ENCODE measurements at regions of chr7 and their contacts with region 1.

Region 1: DNA sequence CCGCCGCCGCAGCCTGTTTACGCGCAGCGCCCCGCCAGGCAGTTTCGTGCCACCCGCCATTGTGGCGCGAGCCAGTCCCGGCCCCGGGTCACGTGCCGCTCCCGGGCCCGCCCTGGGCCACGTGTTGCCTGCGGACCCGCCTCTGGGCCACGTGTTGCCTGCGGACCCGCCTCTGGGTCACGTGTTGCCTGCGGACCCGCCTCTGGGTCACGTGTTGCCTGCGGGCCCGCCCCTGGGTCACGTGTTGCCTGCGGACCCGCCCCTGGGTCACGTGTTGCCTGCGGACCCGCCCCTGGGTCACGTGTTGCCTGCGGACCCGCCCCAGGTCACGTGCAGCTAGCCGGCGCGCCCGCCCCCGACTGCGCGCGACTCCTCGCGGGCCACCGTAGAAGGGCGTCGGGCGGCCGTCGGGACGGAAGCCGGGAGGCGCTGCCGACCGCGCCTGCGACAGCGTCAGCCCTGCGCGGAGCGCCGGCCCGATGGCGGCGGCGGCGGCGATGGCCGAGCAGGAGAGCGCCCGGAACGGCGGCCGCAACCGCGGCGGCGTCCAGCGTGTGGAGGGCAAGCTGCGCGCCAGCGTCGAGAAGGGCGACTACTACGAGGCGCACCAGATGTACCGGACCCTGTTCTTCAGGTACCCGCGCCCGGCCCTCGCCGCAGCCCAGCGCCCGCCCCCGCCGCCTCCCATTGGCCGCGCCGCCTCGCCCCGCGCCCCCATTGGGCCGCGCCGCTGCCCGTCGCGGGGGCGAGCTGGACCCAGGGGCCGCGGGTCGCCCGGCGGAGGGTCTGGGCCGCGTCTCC is at the start of gene GET4:
- DNase-seq: peak; percentile 96
- H3K4me3 ChIP-seq: peak within 1 kb of the TSS; percentile 66 to 99 (median 75)
- H3K27ac ChIP-seq: peak within 1 kb of the TSS; percentile 45
- H3K4me1 ChIP-seq: peaks cover 12% of the 10 kb centered on the region
- H3K27me3 ChIP-seq: no peaks in the 10 kb centered on the region
- CTCF ChIP-seq: peak in 1 of 2 donors; percentile 14
- POLR2A ChIP-seq: peak; percentile 80
- total RNA-seq, gene GET4: 44.7 and 48.4 TPM in 2 replicates

Region 2: DNA sequence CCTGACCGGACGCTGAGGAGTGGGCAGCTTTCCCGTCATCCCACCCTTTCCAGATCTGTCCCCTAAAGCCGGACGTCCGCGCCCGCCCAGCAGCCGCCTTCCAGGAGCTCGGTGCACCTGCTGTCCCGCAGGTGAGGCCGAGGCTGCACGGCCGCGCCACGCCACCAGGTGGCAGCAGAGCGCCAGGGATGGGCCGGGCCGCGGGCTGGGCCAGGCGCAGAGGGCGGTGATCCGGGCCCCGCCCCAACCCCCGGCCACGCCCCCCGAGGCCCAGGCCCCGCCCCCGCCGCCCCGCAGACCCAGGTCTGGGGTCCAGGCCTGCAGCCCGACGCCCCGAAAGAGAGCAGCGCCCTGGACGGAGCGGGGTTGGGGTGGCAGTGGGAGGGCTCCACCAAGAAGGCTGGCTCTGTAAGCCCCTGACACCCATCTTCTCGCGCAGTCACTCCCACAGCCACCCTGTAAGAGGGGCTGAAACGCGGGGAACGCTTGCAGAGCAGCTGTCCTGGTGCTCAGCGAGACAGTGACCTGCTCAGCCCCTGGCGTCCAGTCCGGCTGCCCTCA is 554.2 kb before region 1 on chr7:
- CTCF ChIA-PET with region 1: interaction called, 13 read pairs
- POLR2A ChIA-PET with region 1: no interaction called
- dilution Hi-C with region 1: no loop called
- intact Hi-C with region 1: loop called (anchors 1 kb)
- DNase-seq: peak; percentile 41
- H3K4me3 ChIP-seq: no peak overlapping the region
- H3K27ac ChIP-seq: no peak overlapping the region
- H3K4me1 ChIP-seq: no peaks in the 10 kb centered on the region
- H3K27me3 ChIP-seq: peaks cover 0 to 11% of the 10 kb centered on the region in 2 experiments
- CTCF ChIP-seq: peak; percentile 73 to 79
- POLR2A ChIP-seq: no peak

Region 3: DNA sequence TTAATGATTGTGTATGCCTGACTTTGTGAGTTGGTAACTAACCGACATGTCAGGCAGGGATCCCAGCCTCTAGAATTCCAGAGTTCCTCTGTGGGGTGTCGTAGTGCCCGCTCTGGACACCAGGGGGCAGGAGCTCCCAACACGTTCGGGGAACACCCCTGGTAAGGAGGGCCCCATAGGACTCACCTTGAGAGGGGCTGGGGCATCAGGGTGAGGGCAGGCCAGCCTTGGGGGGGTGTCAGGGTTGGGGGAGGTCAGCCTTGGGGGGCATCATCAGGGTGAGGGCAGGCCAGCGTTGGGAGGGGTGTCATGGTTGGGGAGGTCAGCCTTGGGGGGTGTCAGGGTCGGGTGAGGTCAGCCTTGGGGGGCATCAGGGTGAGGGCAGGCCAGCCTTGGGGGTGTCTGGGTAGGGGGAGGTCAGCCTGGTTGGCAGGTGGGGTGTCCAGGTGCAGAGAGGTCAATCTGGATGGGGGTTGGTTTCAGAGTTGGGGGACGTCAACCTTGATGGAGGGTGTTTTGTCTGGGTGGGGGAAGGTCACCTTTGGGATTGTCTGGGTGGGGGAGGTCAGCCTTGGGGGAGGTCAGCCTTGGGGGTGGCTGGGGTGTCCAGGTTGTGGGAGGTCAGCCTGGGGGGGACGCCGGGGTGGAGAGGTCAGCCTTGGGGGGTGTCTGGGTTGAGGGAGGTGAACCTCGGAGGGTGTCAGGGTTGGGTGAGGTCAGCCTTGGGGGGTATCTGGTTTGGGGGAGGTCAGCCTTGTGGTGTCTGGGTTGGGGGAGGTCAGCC is 89.7 kb before region 1 on chr7:
- CTCF ChIA-PET with region 1: interaction called, 89 read pairs
- POLR2A ChIA-PET with region 1: interaction called, 3 read pairs
- dilution Hi-C with region 1: no loop called
- intact Hi-C with region 1: loop called (anchors 1 kb)
- DNase-seq: peak; percentile 57
- H3K4me3 ChIP-seq: no peak overlapping the region
- H3K27ac ChIP-seq: no peak overlapping the region
- H3K4me1 ChIP-seq: no peaks in the 10 kb centered on the region
- H3K27me3 ChIP-seq: no peaks in the 10 kb centered on the region
- CTCF ChIP-seq: peak; percentile 83 to 84
- POLR2A ChIP-seq: no peak

Region 4: GRCh38 chr7:831596-832166 is 44.7 kb before region 1 on chr7:
- CTCF ChIA-PET with region 1: interaction called, 37 read pairs
- POLR2A ChIA-PET with region 1: no interaction called
- dilution Hi-C with region 1: no loop called
- intact Hi-C with region 1: loop called (anchors 1 kb)
- DNase-seq: peak; percentile 93
- H3K4me3 ChIP-seq: peak overlapping the region in 2 of 3 experiments; percentile 12 to 49
- H3K27ac ChIP-seq: peak overlapping the region; percentile 98
- H3K4me1 ChIP-seq: peaks cover 22% of the 10 kb centered on the region
- H3K27me3 ChIP-seq: no peaks in the 10 kb centered on the region
- CTCF ChIP-seq: no peak
- POLR2A ChIP-seq: no peak

Region 5: DNA sequence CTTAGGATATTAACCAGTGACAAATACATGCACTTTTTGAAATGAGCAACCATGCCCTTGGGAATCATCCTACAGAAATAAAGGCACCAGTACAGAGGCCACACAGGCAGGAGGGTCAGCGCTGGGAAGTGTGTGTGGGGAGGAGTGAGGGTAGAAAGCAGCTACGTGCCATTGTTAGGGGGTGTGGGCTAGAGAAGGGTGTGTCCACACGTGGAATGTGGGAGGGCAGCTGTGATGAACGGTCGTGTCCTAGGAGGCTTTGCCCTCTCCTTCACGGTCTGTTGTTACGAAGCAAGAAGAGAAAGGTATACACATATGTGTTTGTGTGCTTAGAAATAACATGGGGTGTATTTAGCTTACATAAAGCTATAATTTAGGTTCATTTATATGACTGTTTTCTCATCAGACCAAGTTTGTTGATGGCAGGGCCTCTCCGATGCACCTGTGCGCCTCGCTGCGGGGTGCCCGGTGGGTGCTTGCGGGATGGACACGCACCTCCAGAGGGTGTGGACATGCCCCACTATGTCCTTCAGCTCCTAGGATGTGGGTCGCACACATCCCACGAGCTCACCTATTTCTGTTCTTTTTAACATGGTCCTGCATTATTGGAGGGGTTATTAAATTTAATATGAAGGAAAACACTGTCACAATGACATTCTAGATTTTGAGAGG is 16.9 kb before region 1 on chr7:
- CTCF ChIA-PET with region 1: interaction called, 11 read pairs
- POLR2A ChIA-PET with region 1: no interaction called
- dilution Hi-C with region 1: no loop called
- intact Hi-C with region 1: no loop called
- DNase-seq: no peak
- H3K4me3 ChIP-seq: no peak overlapping the region
- H3K27ac ChIP-seq: no peak overlapping the region
- H3K4me1 ChIP-seq: no peaks in the 10 kb centered on the region
- H3K27me3 ChIP-seq: no peaks in the 10 kb centered on the region
- CTCF ChIP-seq: no peak
- POLR2A ChIP-seq: no peak

Region 6: GRCh38 chr7:1825897-1826741 is 949.8 kb after region 1 on chr7:
- CTCF ChIA-PET with region 1: no interaction called
- POLR2A ChIA-PET with region 1: no interaction called
- dilution Hi-C with region 1: no loop called
- intact Hi-C with region 1: no loop called
- DNase-seq: no peak
- H3K4me3 ChIP-seq: no peak overlapping the region
- H3K27ac ChIP-seq: no peak overlapping the region
- H3K4me1 ChIP-seq: no peaks in the 10 kb centered on the region
- H3K27me3 ChIP-seq: no peaks in the 10 kb centered on the region
- CTCF ChIP-seq: no peak
- POLR2A ChIP-seq: no peak

Measured in endothelial cell of umbilical vein (primary cell).